Heart right ventricle (tissue), 16 donors: ENCODE measurements at regions of chr17 and their contacts with region 1.

Region 1: DNA sequence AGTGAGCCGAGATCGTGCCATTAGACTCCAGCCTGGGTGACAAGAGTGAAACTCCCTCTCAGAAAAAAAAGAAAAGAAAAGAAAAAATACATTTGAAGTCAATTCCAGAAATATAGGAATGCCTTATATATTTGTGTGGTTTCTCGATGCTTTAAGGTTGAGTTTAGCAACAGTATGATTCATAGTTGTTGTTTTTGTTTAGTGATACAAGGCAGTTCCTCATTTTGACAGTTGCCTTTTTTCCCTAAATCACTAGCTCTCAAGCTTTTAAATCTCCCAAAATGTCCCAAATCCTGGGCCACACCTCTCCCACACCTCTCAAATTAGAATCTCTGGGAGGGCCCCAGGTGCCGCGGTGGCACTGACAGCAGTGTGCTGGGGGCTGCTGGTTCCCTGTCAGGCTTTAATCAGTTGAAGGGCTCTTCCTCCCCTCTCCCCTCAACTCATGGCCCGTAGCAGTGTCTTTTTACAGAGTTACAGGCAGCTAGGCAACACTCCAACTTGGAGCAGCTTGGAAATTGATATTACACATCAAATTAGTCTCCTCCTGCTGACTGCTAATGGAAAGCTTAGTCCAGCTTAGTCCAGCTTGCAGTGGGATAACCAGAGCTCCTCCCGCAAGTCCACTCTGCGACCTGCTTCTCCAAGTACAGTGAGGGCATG is 58.4 kb downstream of the EPN2 start:
- DNase-seq: no peak
- ATAC-seq: peak in 1 of 8 donors; percentile 20
- H3K4me3 ChIP-seq: no peak overlapping the region
- H3K27ac ChIP-seq: peak overlapping the region in 1 of 10 donors; percentile 20
- H3K4me1 ChIP-seq: peaks cover 6 to 69% (median 60%) of the 10 kb centered on the region in 9 donors
- H3K27me3 ChIP-seq: peaks cover 0 to 40% (median 0%) of the 10 kb centered on the region in 7 donors
- CTCF ChIP-seq: no peak

Region 2: GRCh38 chr17:19281161-19281560 is 14.4 kb before region 1 on chr17:
- intact Hi-C with region 1: loop called in 1 of 10 experiments (anchors 2 kb)
- DNase-seq: no peak
- ATAC-seq: no peak
- H3K4me3 ChIP-seq: no peak overlapping the region
- H3K27ac ChIP-seq: no peak overlapping the region
- H3K4me1 ChIP-seq: peaks cover 0 to 58% (median 39%) of the 10 kb centered on the region in 9 donors
- H3K27me3 ChIP-seq: peaks cover 0 to 6% (median 0%) of the 10 kb centered on the region in 7 donors
- CTCF ChIP-seq: no peak

Region 3: GRCh38 chr17:19346351-19347255 is 51.0 kb after region 1 on chr17:
- intact Hi-C with region 1: no loop called
- DNase-seq: peak; percentile 67 to 85
- ATAC-seq: peak; percentile 50 to 86 (median 78)
- H3K4me3 ChIP-seq: no peak overlapping the region
- H3K27ac ChIP-seq: peak overlapping the region in 9 of 10 donors; percentile 46 to 84 (median 77)
- H3K4me1 ChIP-seq: peaks cover 11 to 59% (median 39%) of the 10 kb centered on the region in 9 donors
- H3K27me3 ChIP-seq: no peaks in the 10 kb centered on the region
- CTCF ChIP-seq: no peak